HepG2 (cell line): ENCODE measurements at regions of chr14 and their contacts with region 1.

Region 1: DNA sequence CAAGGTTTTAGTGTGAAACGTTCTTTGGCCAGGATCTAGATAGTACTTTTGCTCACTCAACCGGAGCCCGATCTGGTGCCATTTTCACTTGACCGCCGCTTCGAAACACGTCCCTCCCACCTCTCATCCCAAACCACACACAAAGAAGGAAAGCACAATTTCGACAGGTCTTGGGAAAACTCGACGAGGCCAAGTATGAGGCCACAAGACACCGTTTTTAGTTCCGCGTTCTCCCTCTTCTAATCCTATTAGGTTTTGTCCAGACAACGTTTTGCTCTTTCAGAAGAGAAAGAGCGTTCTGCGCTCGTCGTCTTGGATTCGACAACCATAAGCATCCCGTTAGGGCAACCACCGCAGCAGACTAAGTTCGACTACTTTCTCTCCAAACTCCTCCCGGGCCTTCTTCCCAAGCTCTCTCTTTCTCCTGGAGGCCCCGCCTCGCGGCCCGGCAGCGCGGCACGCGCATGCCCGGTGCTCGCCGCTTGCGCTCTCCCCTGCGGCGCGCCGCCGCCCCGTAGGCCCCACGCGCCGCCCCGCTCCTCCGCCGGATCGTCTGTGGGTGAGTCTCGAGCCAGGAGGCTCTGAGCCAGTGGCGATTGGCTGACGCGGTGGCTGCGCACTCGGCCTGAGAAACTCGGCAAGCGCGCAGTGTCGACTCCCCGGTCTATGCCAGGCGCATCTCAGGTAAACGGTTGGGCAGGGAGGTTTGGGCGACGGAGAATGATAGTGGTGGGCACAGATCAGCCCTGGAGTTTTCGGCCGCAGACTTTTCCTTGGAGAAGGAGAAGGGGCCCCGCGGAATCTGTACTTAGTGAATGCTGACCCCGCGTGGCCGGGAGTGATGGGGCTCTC is at the start of gene MIPOL1:
- DNase-seq: peak; percentile 79
- ATAC-seq: peak; percentile 97
- H3K4me3 ChIP-seq: peak within 1 kb of the TSS; percentile 62 to 85 (median 73)
- H3K27ac ChIP-seq: peak within 1 kb of the TSS; percentile 71
- H3K4me1 ChIP-seq: peaks cover 69% of the 10 kb centered on the region
- H3K27me3 ChIP-seq: no peaks in the 10 kb centered on the region; a peak in 1 of 5 replicates
- CTCF ChIP-seq: peak; percentile 77
- EP300 ChIP-seq: peak in 1 of 2 experiments; percentile 56; a peak in 1 of 4 replicates
- POLR2A ChIP-seq: peak; percentile 83 to 92
- RAD21 ChIP-seq: peak; percentile 68
- total RNA-seq, gene MIPOL1: 34.2 and 35.2 TPM in 2 replicates

Region 2: DNA sequence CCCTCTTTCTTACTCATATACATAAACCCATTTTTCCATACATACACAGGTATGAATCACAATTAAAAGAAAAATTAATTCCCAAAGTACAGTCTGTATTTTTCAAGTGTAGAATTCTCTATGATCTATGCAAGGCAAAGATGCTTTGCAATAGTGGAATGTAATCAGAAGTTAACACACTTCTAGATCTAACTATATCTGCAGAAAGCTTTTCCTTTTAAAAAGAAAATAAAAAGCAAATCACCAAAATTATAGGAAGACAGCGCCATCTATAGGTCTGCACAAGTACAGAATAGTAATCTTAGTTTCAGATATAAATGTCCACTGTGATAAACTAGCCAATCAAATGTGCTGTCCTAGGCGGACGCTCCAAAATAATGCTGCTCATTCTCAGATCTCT is 47.2 kb before region 1 on chr14:
- CTCF ChIA-PET with region 1: interaction called, 4 read pairs
- POLR2A ChIA-PET with region 1: no interaction called
- in situ Hi-C with region 1: no loop called
- intact Hi-C with region 1: loop called (anchors 2 kb)
- DNase-seq: peak; percentile 63
- ATAC-seq: peak; percentile 75
- H3K4me3 ChIP-seq: no peak overlapping the region
- H3K27ac ChIP-seq: no peak overlapping the region
- H3K4me1 ChIP-seq: no peaks in the 10 kb centered on the region
- H3K27me3 ChIP-seq: no peaks in the 10 kb centered on the region
- CTCF ChIP-seq: peak; percentile 78
- EP300 ChIP-seq: no peak
- POLR2A ChIP-seq: no peak
- RAD21 ChIP-seq: no peak

Region 3: GRCh38 chr14:37172024-37172869 is 25.4 kb before region 1 on chr14 and contains the start of gene SLC25A21:
- CTCF ChIA-PET with region 1: no interaction called
- POLR2A ChIA-PET with region 1: interaction called, 29 read pairs
- in situ Hi-C with region 1: no loop called
- intact Hi-C with region 1: loop called (anchors 1 kb)
- DNase-seq: peak; percentile 85
- ATAC-seq: peak; percentile 96
- H3K4me3 ChIP-seq: peak within 1 kb of the TSS; percentile 64 to 83 (median 71)
- H3K27ac ChIP-seq: peak within 1 kb of the TSS; percentile 69
- H3K4me1 ChIP-seq: peaks cover 14% of the 10 kb centered on the region
- H3K27me3 ChIP-seq: peaks cover 0 to 12% of the 10 kb centered on the region in 2 experiments; a peak in 1 of 5 replicates
- CTCF ChIP-seq: peak; percentile 50
- EP300 ChIP-seq: peak; percentile 9 to 50; a peak in 3 of 4 replicates
- POLR2A ChIP-seq: peak; percentile 91 to 94
- RAD21 ChIP-seq: peak; percentile 60
- total RNA-seq, gene SLC25A21: 2.9 and 3.3 TPM in 2 replicates

Region 4: DNA sequence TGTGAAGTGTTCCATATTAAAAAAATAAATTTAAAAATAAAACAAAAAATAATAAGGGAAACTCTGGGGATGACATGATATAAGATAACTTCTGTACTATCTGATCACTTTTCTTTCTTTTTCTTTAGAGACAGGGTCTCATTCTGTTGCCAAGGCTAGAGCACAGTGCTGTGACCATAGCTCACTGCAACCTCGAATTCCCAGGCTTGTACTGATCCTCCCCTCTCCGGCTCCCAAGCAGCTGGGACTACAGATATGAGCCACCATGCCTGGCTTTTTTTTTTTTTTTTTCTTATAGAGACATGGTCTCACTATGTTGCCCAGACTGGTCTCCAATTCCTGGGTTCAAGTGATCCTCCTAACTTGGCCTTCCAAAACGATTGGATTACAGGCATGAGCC is 10.4 kb before region 1 on chr14:
- CTCF ChIA-PET with region 1: no interaction called
- POLR2A ChIA-PET with region 1: interaction called, 24 read pairs
- in situ Hi-C with region 1: no loop called
- intact Hi-C with region 1: loop called (anchors 1 kb)
- DNase-seq: no peak
- ATAC-seq: peak; percentile 71
- H3K4me3 ChIP-seq: no peak overlapping the region
- H3K27ac ChIP-seq: no peak overlapping the region
- H3K4me1 ChIP-seq: peaks cover 16% of the 10 kb centered on the region
- H3K27me3 ChIP-seq: peaks cover 0 to 2% of the 10 kb centered on the region in 2 experiments; a peak in 2 of 5 replicates
- CTCF ChIP-seq: no peak
- EP300 ChIP-seq: no peak
- POLR2A ChIP-seq: no peak
- RAD21 ChIP-seq: no peak

Region 5: DNA sequence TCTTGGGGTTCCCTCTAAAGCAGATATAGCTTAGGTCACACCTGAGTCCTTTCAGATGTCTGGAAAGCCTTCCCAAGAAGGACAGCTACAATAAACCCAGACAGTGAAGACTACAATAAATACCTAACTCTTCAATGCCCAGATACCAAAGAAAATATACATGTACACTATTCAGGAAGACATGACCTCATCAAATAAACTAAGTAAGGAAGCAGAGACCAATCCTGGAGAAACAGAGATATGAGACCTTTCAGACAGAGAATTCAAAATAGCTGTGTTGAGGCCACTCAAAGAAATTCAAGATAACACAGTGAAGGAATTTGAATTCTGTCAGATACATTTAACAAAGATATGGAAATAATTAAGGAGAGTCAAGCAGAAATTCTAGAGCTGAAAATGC is 15.4 kb after region 1 on chr14:
- CTCF ChIA-PET with region 1: no interaction called
- POLR2A ChIA-PET with region 1: no interaction called
- in situ Hi-C with region 1: no loop called
- intact Hi-C with region 1: no loop called
- DNase-seq: no peak
- ATAC-seq: no peak
- H3K4me3 ChIP-seq: no peak overlapping the region
- H3K27ac ChIP-seq: no peak overlapping the region
- H3K4me1 ChIP-seq: peaks cover 13% of the 10 kb centered on the region
- H3K27me3 ChIP-seq: no peaks in the 10 kb centered on the region
- CTCF ChIP-seq: no peak
- EP300 ChIP-seq: no peak
- POLR2A ChIP-seq: no peak
- RAD21 ChIP-seq: no peak